ENCODE measurements at regions of chr20 and their contacts with region 1.

Region 1: GRCh38 chr20:17536944-17537444 is 5.8 kb upstream of the BFSP1 start:
- DNase-seq: peak in 8 of 10 donors; percentile 49 to 72 (median 68)
- H3K4me3 ChIP-seq: no peak overlapping the region
- H3K27ac ChIP-seq: no peak overlapping the region
- H3K27me3 ChIP-seq: peaks cover 0 to 5% (median 0%) of the 10 kb centered on the region in 45 donors
- CTCF ChIP-seq: peak; percentile 66 to 93 (median 88)

Region 2: GRCh38 chr20:17569616-17570346 is 32.8 kb after region 1 on chr20 and contains the start of gene DSTN:
- intact Hi-C with region 1: loop called in 1 of 2 experiments (anchors 5 kb)
- DNase-seq: peak; percentile 78 to 96 (median 90)
- H3K4me3 ChIP-seq: peak within 1 kb of the TSS; percentile 62 to 100 (median 98)
- H3K27ac ChIP-seq: peak within 1 kb of the TSS; percentile 65 to 98 (median 93)
- H3K27me3 ChIP-seq: no peaks in the 10 kb centered on the region
- CTCF ChIP-seq: peak in 4 of 56 donors; percentile 3 to 15 (median 10)
- total RNA-seq, gene DSTN: 105 to 421 (median 232) TPM

Region 3: DNA sequence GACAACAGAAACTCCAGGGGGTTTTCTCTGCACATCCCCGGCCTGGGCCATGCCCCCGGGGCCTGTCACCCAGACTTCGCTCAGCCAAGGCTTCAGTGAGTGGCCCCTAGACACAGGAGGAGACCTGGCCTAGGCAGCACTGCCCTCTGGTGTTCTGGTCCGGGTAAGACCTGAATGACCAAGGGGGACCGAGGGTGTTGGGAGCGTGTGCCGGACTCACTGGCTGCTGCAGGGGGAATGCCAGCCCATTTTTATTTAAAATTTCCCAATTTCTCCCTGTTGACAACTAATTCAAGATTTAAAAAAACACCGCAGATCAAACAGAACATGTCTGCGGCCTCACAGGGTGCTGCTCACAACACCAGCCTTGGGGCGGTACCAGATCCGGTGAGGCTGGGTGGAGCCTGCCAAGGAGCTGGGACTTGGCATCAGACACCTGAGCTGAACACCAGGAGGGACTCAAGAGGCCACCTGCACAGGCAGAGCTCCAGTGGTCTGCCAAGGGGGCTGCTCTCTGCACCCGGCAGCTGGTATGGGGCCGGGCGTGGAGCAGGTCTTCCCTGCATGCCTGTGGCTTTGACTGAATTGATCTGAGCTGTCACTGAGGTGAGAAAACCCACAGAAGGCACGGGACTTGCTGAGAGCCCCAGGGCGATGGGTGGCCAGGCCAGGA is 80.7 kb after region 1 on chr20:
- intact Hi-C with region 1: loop called (anchors 1 to 5 kb)
- DNase-seq: peak; percentile 54 to 85 (median 65)
- H3K4me3 ChIP-seq: peak overlapping the region in 1 of 59 donors; percentile 13
- H3K27ac ChIP-seq: peak overlapping the region in 2 of 59 donors; percentile 18 to 19
- H3K27me3 ChIP-seq: no peaks in the 10 kb centered on the region
- CTCF ChIP-seq: peak in 55 of 56 donors; percentile 56 to 87 (median 77)

Region 4: DNA sequence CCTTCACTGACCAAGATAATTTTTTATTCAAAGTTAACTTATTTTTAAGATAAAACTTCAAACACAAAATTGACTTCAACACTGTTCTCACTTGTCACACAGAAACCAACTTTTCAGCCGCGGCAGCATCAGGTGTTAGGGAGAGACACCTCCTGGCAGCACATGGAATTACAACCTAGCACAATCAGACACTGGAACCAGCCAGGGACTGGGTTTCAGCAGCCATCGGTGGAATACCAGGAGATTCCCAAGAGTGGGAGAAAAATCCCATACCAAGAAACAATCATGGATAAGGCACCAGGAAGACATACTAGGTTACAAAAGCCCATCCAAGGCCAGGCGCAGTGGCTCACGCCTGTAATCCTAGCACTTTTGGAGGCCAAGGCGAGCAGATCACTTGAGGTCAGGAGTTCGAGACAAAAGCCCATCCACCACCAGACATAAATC is 361.6 kb after region 1 on chr20:
- intact Hi-C with region 1: loop called in 1 of 2 experiments (anchors 5 kb)
- DNase-seq: peak in 7 of 10 donors; percentile 36 to 86 (median 70)
- H3K4me3 ChIP-seq: no peak overlapping the region
- H3K27ac ChIP-seq: no peak overlapping the region
- H3K27me3 ChIP-seq: no peaks in the 10 kb centered on the region
- CTCF ChIP-seq: peak; percentile 78 to 96 (median 90)

Measured in dorsolateral prefrontal cortex (tissue), 120 donors.